ENCODE measurements at regions of chr16 and their contacts with region 1.

Region 1: GRCh38 chr16:50210266-50211038 is 55.9 kb upstream of the ADCY7 start:
- DNase-seq: peak; percentile 80
- H3K4me3 Mint-ChIP-seq: no peak overlapping the region
- H3K27ac Mint-ChIP-seq: peak overlapping the region; percentile 46
- H3K4me1 Mint-ChIP-seq: peaks cover 17% of the 10 kb centered on the region
- H3K27me3 Mint-ChIP-seq: no peaks in the 10 kb centered on the region

Region 2: DNA sequence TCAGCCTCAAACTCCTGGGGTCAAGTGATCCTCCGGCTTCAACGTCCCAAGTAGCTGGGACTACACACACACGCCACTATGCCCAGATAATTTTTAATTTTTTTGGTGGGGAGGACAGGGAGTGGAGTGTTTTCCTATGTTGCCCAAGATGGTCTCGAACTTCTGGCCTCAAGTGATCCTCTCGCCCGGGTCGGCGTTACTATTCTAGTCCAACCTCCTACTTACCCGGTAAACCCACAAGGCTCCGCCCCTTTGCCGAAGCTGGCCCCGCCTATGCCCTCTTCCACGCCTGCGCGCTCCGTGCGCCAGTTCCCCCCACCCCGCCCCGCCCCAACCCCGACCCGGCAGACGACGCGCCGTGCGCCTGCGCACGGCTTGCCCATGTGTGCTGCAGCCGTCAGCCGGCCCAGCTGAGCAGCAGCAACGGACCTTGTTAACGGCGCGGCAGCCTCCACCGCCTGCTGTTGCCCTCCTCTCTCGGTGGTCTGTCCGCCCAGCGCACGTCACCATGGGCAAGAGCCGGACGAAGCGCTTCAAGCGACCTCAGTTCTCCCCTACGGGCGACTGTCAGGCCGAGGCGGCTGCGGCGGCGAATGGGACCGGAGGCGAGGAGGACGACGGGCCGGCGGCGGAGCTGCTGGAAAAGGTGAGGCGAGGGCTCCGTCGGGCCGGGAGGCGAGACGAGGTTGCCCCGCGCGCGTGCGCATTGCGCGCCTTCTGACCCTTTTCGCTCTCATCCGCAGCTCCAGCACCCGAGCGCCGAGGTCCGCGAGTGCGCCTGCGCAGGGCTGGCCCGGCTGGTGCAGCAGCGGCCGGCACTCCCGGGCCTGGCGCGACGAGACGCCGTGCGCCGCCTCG is 144.6 kb before region 1 on chr16 and contains the start of gene HEATR3:
- CTCF ChIA-PET with region 1: interaction called, 88 read pairs
- POLR2A ChIA-PET with region 1: no interaction called
- intact Hi-C with region 1: loop called (anchors 1 kb)
- DNase-seq: peak; percentile 98
- H3K4me3 Mint-ChIP-seq: peak within 1 kb of the TSS; percentile 90
- H3K27ac Mint-ChIP-seq: peak within 1 kb of the TSS; percentile 87
- H3K4me1 Mint-ChIP-seq: peaks cover 31% of the 10 kb centered on the region
- H3K27me3 Mint-ChIP-seq: no peaks in the 10 kb centered on the region
- total RNA-seq, gene HEATR3: 17.6 to 18.6 TPM

Region 3: GRCh38 chr16:50152807-50153452 is 57.5 kb before region 1 on chr16 and contains the start of gene TENT4B:
- CTCF ChIA-PET with region 1: interaction called, 21 read pairs
- POLR2A ChIA-PET with region 1: interaction called, 3 read pairs
- intact Hi-C with region 1: loop called (anchors 2 kb)
- DNase-seq: peak; percentile 90
- H3K4me3 Mint-ChIP-seq: peak within 1 kb of the TSS; percentile 80
- H3K27ac Mint-ChIP-seq: peak within 1 kb of the TSS; percentile 91
- H3K4me1 Mint-ChIP-seq: peaks cover 32% of the 10 kb centered on the region
- H3K27me3 Mint-ChIP-seq: no peaks in the 10 kb centered on the region
- total RNA-seq, gene TENT4B: 14.4 to 14.8 TPM

Region 4: GRCh38 chr16:50195276-50195675 is 15.2 kb before region 1 on chr16:
- CTCF ChIA-PET with region 1: interaction called, 22 read pairs
- POLR2A ChIA-PET with region 1: interaction called, 3 read pairs
- intact Hi-C with region 1: no loop called
- DNase-seq: no peak
- H3K4me3 Mint-ChIP-seq: no peak overlapping the region
- H3K27ac Mint-ChIP-seq: no peak overlapping the region
- H3K4me1 Mint-ChIP-seq: peaks cover 48% of the 10 kb centered on the region
- H3K27me3 Mint-ChIP-seq: no peaks in the 10 kb centered on the region

Region 5: GRCh38 chr16:50354629-50355456 is 144.4 kb after region 1 on chr16:
- CTCF ChIA-PET with region 1: interaction called, 78 read pairs
- POLR2A ChIA-PET with region 1: no interaction called
- intact Hi-C with region 1: loop called (anchors 1 kb)
- DNase-seq: no peak
- H3K4me3 Mint-ChIP-seq: no peak overlapping the region
- H3K27ac Mint-ChIP-seq: no peak overlapping the region
- H3K4me1 Mint-ChIP-seq: peaks cover 30% of the 10 kb centered on the region
- H3K27me3 Mint-ChIP-seq: no peaks in the 10 kb centered on the region